Naive thymus-derived CD4-positive, alpha-beta T cell (primary cell): ENCODE measurements at regions of chr14 and their contacts with region 1.

Region 1: DNA sequence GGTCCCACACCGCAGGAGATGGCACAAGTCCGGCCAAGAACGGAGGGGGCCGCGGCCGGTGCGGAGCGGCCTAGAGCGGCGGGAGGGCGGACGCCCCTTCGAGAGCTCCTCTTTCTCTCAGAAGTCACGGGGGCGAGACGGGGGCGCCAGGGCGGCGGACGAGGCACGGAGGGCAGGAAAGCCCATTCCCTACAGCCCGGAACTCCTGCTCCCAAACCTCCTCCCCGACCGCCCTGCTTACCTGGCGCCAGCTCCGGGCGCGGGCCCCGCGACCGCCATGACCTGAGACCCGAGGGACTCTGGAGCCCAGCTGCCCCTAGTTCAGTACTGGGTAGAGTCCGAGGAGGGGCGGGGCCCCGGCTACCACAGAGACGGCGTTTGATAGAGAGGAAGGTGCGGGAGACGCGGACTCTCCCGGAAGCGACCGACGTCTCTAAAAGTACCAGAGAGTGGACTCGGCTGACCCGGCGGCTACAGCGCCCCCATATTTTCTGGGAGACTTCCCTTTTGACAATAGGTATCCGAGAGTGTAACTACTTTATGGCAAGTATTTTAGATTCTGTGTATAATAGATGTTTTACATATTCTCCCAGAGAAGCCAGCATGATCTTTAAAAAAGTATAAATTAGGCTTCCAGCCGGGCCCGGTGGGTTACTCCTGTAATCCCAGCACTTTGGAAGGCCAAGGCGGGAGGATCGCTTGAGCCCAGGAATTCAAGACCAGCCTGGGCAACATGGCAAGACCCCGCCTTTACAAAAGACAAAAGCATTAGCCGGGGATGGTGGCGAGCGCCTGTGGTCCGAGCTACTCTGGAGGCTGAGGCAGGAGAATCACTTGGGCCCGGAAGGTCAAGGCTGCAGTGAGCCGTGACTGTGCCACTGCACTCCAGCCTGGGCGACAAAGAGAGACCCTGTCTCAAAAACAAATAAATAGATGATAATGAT is at the start of gene ABCD4:
- DNase-seq: peak; percentile 50 to 85 (median 65)
- ATAC-seq: peak; percentile 95
- H3K4me3 ChIP-seq: peak within 1 kb of the TSS; percentile 87
- H3K4me3 Mint-ChIP-seq: peak within 1 kb of the TSS; percentile 90 to 100 (median 96)
- H3K27ac ChIP-seq: peak within 1 kb of the TSS; percentile 77
- H3K27ac Mint-ChIP-seq: peak within 1 kb of the TSS; percentile 81 to 99 (median 96)
- H3K4me1 ChIP-seq: peaks cover 17 to 19% of the 10 kb centered on the region in 2 donors
- H3K4me1 Mint-ChIP-seq: peaks cover 18 to 49% (median 33%) of the 10 kb centered on the region in 7 donors
- H3K27me3 ChIP-seq: no peaks in the 10 kb centered on the region
- H3K27me3 Mint-ChIP-seq: no peaks in the 10 kb centered on the region
- total RNA-seq, gene ABCD4: 57.6 to 109 (median 68.2) TPM

Region 2: GRCh38 chr14:73644531-73645247 is 658.2 kb before region 1 on chr14 and contains the start of gene DNAL1:
- CTCF ChIA-PET with region 1: no interaction called
- POLR2A ChIA-PET with region 1: no interaction called
- intact Hi-C with region 1: loop called in 1 of 2 experiments (anchors 10 kb)
- DNase-seq: peak; percentile 80 to 93 (median 86)
- ATAC-seq: peak; percentile 99
- H3K4me3 ChIP-seq: peak within 1 kb of the TSS; percentile 92
- H3K4me3 Mint-ChIP-seq: peak within 1 kb of the TSS; percentile 89 to 99 (median 94)
- H3K27ac ChIP-seq: peak within 1 kb of the TSS; percentile 80
- H3K27ac Mint-ChIP-seq: peak within 1 kb of the TSS; percentile 86 to 98 (median 93)
- H3K4me1 ChIP-seq: peaks cover 7 to 9% of the 10 kb centered on the region in 2 donors
- H3K4me1 Mint-ChIP-seq: peaks cover 8 to 20% (median 16%) of the 10 kb centered on the region in 7 donors
- H3K27me3 ChIP-seq: no peaks in the 10 kb centered on the region
- H3K27me3 Mint-ChIP-seq: no peaks in the 10 kb centered on the region
- total RNA-seq, gene DNAL1: 3.6 to 8.4 (median 6.5) TPM

Region 3: GRCh38 chr14:74712499-74713394 is 409.8 kb after region 1 on chr14 and contains the starts of genes AREL1 and FCF1:
- CTCF ChIA-PET with region 1: no interaction called
- POLR2A ChIA-PET with region 1: no interaction called
- intact Hi-C with region 1: loop called in 1 of 2 experiments (anchors 1 kb)
- DNase-seq: peak; percentile 53 to 87 (median 82)
- ATAC-seq: peak; percentile 96
- H3K4me3 ChIP-seq: peak within 1 kb of the TSS; percentile 75
- H3K4me3 Mint-ChIP-seq: peak within 1 kb of the TSS; percentile 93 to 100 (median 97)
- H3K27ac ChIP-seq: peak within 1 kb of the TSS; percentile 96
- H3K27ac Mint-ChIP-seq: peak within 1 kb of the TSS; percentile 95 to 100 (median 98)
- H3K4me1 ChIP-seq: peaks cover 9 to 24% of the 10 kb centered on the region in 2 donors
- H3K4me1 Mint-ChIP-seq: peaks cover 33 to 79% (median 66%) of the 10 kb centered on the region in 7 donors
- H3K27me3 ChIP-seq: no peaks in the 10 kb centered on the region
- H3K27me3 Mint-ChIP-seq: no peaks in the 10 kb centered on the region
- total RNA-seq, gene AREL1: 35.6 to 52.0 (median 43.5) TPM
- total RNA-seq, gene FCF1: 36.5 to 66.6 (median 60.8) TPM